CD4-positive, alpha-beta memory T cell (primary cell): ENCODE measurements at regions of chr14 and their contacts with region 1.

Region 1: DNA sequence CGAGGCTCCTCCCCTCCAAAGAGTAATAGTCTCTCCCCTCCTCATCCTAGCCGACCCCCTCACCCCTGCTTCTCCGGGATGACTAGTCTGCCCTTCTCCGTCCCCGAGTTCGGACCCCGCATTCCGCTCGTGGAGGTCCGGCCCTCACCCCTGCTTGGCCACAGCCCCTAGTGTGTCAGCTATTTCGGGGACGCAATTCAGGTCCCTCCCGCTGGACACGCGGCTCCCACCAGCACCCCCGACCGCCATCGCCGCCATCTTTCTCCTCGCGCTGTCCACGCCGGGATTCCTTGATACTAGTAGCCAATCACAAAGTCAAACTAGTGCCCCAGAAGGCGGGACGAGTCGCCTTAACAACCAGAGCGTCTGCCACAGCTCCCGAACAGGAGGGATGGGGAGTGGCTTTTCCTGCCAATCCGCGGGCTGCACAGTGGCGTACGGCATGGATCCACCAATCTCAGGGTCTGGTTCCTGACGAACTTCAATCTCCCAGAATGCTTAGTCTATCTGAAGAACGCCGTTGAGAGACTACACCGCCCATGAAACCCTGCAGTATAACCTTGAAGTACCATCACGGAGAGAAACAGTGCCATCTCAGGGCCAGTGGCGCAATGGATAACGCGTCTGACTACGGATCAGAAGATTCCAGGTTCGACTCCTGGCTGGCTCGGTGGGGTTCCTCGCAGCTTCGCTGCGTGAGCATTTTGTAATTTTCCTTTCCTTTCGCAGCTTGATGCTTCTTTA is at the start of gene PRMT5:
- DNase-seq: peak; percentile 98 to 100 (median 99)
- H3K4me3 ChIP-seq: peak within 1 kb of the TSS; percentile 83 to 99
- H3K4me3 Mint-ChIP-seq: no peak within 1 kb of the TSS
- H3K27ac ChIP-seq: peak within 1 kb of the TSS; percentile 91
- H3K27ac Mint-ChIP-seq: peak within 1 kb of the TSS in 1 of 7 donors; percentile 75
- H3K4me1 ChIP-seq: peaks cover 17% of the 10 kb centered on the region
- H3K4me1 Mint-ChIP-seq: peaks cover 9 to 14% (median 12%) of the 10 kb centered on the region in 4 donors
- H3K27me3 ChIP-seq: no peaks in the 10 kb centered on the region
- H3K27me3 Mint-ChIP-seq: no peaks in the 10 kb centered on the region
- total RNA-seq, gene PRMT5: 25.8 to 30.5 TPM

Region 2: GRCh38 chr14:22829661-22830442 is 99.4 kb before region 1 on chr14 and contains the start of gene MRPL52:
- CTCF ChIA-PET with region 1: interaction called, 6 read pairs
- POLR2A ChIA-PET with region 1: interaction called, 3 read pairs
- intact Hi-C with region 1: loop called (anchors 1 kb)
- DNase-seq: peak; percentile 86 to 93 (median 88)
- H3K4me3 ChIP-seq: peak within 1 kb of the TSS; percentile 80 to 85
- H3K4me3 Mint-ChIP-seq: peak within 1 kb of the TSS; percentile 91 to 96 (median 92)
- H3K27ac ChIP-seq: peak within 1 kb of the TSS; percentile 85
- H3K27ac Mint-ChIP-seq: peak within 1 kb of the TSS; percentile 96 to 99 (median 98)
- H3K4me1 ChIP-seq: peaks cover 18% of the 10 kb centered on the region
- H3K4me1 Mint-ChIP-seq: peaks cover 17 to 32% (median 24%) of the 10 kb centered on the region in 4 donors
- H3K27me3 ChIP-seq: no peaks in the 10 kb centered on the region
- H3K27me3 Mint-ChIP-seq: peaks cover 0 to 1% of the 10 kb centered on the region in 2 donors
- total RNA-seq, gene MRPL52: 58.0 to 68.3 TPM

Region 3: GRCh38 chr14:22900081-22900799 is 29.0 kb before region 1 on chr14:
- CTCF ChIA-PET with region 1: interaction called, 11 read pairs
- POLR2A ChIA-PET with region 1: interaction called, 3 read pairs
- intact Hi-C with region 1: no loop called
- DNase-seq: peak; percentile 66 to 72 (median 67)
- H3K4me3 ChIP-seq: no peak overlapping the region
- H3K4me3 Mint-ChIP-seq: no peak overlapping the region
- H3K27ac ChIP-seq: no peak overlapping the region
- H3K27ac Mint-ChIP-seq: peak overlapping the region; percentile 12 to 65 (median 54)
- H3K4me1 ChIP-seq: peaks cover 4% of the 10 kb centered on the region
- H3K4me1 Mint-ChIP-seq: peaks cover 5 to 15% (median 5%) of the 10 kb centered on the region in 4 donors
- H3K27me3 ChIP-seq: no peaks in the 10 kb centered on the region
- H3K27me3 Mint-ChIP-seq: no peaks in the 10 kb centered on the region

Region 4: GRCh38 chr14:22945642-22946041 is 16.4 kb after region 1 on chr14:
- CTCF ChIA-PET with region 1: interaction called, 22 read pairs
- POLR2A ChIA-PET with region 1: interaction called, 5 read pairs
- intact Hi-C with region 1: no loop called
- DNase-seq: no peak
- H3K4me3 ChIP-seq: no peak overlapping the region
- H3K4me3 Mint-ChIP-seq: no peak overlapping the region
- H3K27ac ChIP-seq: no peak overlapping the region
- H3K27ac Mint-ChIP-seq: peak overlapping the region in 2 of 7 donors; percentile 53 to 80
- H3K4me1 ChIP-seq: no peaks in the 10 kb centered on the region
- H3K4me1 Mint-ChIP-seq: peaks cover 0 to 5% (median 2%) of the 10 kb centered on the region in 4 donors
- H3K27me3 ChIP-seq: no peaks in the 10 kb centered on the region
- H3K27me3 Mint-ChIP-seq: no peaks in the 10 kb centered on the region

Region 5: DNA sequence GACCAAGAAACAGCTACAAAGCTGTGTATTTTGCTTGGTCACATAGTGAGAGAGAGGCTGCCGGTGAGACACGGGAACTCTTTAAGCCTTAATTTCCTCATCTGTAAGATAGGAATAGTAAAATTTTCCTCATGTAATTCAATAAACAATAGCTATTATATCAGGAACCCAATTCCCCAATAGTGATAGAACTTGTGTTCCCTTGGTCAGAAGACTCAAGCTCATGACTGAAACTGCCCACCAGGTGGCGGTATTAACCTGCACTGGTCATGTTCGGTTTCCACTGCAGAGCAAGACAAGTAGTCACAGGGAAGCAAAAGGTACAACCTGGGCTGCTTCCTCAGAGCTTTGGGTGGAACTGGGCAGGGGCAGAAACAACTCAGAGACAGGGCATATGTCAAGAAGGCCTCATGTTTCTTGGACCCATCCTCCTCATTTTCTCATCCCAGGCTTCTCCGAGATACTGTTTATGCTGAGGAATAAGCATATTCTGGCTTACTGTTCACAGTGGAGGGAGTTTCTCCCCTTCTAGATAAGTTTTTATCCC is 57.3 kb after region 1 on chr14:
- CTCF ChIA-PET with region 1: interaction called, 94 read pairs
- POLR2A ChIA-PET with region 1: interaction called, 30 read pairs
- intact Hi-C with region 1: loop called (anchors 1 kb)
- DNase-seq: peak; percentile 80 to 86 (median 81)
- H3K4me3 ChIP-seq: no peak overlapping the region
- H3K4me3 Mint-ChIP-seq: no peak overlapping the region
- H3K27ac ChIP-seq: no peak overlapping the region
- H3K27ac Mint-ChIP-seq: peak overlapping the region in 1 of 7 donors; percentile 41
- H3K4me1 ChIP-seq: peaks cover 8% of the 10 kb centered on the region
- H3K4me1 Mint-ChIP-seq: peaks cover 0 to 4% (median 0%) of the 10 kb centered on the region in 4 donors
- H3K27me3 ChIP-seq: no peaks in the 10 kb centered on the region
- H3K27me3 Mint-ChIP-seq: no peaks in the 10 kb centered on the region

Region 6: DNA sequence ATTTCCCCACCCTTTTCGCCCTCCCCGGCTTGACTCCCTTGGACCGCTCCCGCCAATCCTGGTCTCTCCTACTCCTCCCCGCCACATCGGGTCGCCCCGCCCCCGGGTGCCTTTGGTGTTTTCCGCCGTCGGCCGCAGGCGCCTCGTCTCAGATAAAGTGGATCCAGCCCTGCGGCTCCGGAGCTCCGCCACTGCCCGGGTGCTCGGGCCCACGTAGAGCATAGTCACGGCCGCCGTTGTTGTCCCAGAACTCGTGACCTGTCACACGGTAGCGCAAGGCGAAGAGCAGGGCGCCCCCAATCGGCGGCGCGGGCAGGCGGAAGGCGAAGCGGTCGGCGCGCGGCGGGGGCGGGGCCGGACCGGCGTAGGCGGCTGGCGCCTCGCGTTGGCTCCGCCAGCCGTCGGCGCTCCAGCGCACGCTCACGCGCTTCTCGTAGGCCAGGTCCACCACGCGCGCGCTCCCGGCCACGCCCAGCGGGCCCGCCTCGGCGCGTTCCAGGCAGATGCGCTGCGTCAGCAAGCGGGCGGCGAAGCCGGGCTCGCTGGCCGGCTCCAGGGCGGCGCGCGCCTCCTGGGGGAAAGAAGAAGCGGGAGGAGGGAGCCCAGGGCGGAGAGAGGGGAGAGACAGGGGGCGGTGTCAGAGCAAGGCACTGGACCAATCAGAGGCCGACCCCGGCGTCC is 372.2 kb after region 1 on chr14:
- CTCF ChIA-PET with region 1: no interaction called
- POLR2A ChIA-PET with region 1: interaction called, 7 read pairs
- intact Hi-C with region 1: loop called (anchors 5 kb)
- DNase-seq: peak; percentile 95 to 99 (median 98)
- H3K4me3 ChIP-seq: peak overlapping the region; percentile 86 to 90
- H3K4me3 Mint-ChIP-seq: peak overlapping the region; percentile 89 to 100 (median 90)
- H3K27ac ChIP-seq: peak overlapping the region; percentile 87
- H3K27ac Mint-ChIP-seq: peak overlapping the region; percentile 92 to 99 (median 96)
- H3K4me1 ChIP-seq: peaks cover 14% of the 10 kb centered on the region
- H3K4me1 Mint-ChIP-seq: peaks cover 14 to 29% (median 23%) of the 10 kb centered on the region in 4 donors
- H3K27me3 ChIP-seq: no peaks in the 10 kb centered on the region
- H3K27me3 Mint-ChIP-seq: peaks cover 8 to 9% of the 10 kb centered on the region in 2 donors